Activated naive CD8-positive, alpha-beta T cell treated with anti-CD3 and anti-CD28 coated beads, Interleukin-2, amount 10 ng/mL, durations not matched to agents 7 days and 5 days (primary cell): ENCODE measurements at regions of chr7 and their contacts with region 1.

Region 1: DNA sequence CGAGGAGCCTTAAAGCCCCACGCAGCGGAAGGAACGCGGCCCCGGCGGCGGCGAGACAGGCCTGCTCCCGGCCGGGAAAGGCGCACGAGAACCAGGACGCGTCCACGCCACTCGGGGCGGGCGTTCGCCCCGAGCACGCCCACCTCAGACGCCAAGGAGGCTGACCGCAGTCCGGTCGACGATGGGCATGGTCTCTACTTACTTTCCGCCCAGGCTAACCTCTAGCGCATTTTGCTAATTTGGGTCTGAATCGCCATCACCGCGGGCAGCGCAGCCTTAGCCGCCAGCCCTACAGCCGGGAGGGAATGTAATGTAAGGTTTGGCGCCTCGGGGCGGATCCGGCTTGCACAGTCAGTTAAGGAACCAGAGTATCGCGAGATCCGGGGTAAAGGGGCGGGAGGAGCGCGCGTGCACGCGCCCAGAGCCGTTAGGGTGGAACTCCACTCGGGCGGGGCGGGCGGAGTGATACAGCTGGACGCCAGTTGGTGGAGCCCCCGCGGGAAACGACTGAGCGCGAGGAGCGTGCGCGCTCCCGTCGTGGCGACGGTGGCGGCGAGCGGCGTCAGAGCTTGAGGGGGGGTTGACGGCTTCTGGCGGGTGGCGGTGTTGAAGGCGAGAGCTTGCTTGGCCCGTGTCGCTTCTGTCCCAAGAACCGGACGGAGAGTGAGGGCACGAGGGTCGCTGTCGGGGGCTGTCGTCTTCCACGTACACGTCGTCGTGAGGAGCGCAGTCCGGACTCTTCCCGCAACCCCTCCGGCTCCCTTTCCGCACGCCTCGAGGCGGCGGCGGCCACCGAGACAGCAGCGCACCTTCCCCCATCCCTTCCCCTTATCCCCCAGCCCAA is at the start of gene LUC7L2:
- DNase-seq: peak; percentile 98
- ATAC-seq: peak; percentile 72
- H3K4me3 Mint-ChIP-seq: peak within 1 kb of the TSS; percentile 96
- H3K27ac Mint-ChIP-seq: peak within 1 kb of the TSS; percentile 100
- H3K4me1 Mint-ChIP-seq: peaks cover 25% of the 10 kb centered on the region
- H3K27me3 Mint-ChIP-seq: no peaks in the 10 kb centered on the region
- total RNA-seq, gene LUC7L2: 138 TPM

Region 2: GRCh38 chr7:139104091-139104450 is 255.5 kb before region 1 on chr7:
- POLR2A ChIA-PET with region 1: interaction called, 17 read pairs
- DNase-seq: no peak
- ATAC-seq: peak; percentile 15
- H3K4me3 Mint-ChIP-seq: peak overlapping the region; percentile 93
- H3K27ac Mint-ChIP-seq: peak overlapping the region; percentile 94
- H3K4me1 Mint-ChIP-seq: peaks cover 37% of the 10 kb centered on the region
- H3K27me3 Mint-ChIP-seq: no peaks in the 10 kb centered on the region

Region 3: DNA sequence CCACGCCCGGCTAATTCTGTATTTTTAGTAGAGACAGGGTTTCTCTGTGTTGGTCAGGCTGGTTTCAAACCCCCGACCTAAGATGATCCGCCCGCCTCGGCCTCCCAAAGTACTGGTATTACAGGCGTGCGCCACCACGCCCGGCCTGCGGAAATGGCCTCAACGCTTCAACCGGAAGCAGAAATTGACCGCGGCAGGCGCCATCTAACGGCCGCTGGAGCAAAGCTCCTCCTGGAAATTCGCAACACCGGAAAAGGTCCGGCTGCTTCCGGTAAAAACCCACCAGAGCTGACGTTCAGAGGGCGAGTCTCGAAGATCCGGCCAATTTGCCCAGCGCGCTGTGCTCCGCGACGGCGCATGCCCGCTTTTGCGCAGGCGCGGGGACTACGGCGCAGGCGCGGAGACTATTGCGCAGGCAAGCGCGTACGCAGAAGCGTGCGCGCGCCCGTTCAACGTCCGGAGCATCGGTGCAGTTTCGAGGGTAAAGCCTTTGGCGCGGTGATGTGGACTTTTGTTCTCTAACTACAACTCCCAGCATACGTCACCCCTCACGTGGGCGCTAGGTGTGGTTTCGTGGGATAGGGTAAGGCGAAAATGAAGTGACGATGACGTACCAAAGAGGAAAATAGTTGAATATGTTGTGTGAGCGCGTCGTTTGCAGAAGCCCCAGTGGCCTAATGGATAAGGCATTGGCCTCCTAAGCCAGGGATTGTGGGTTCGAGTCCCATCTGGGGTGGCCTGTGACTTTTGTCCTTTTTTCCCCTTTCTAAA is 19.4 kb before region 1 on chr7:
- POLR2A ChIA-PET with region 1: interaction called, 33 read pairs
- DNase-seq: peak; percentile 97
- ATAC-seq: peak; percentile 75
- H3K4me3 Mint-ChIP-seq: peak overlapping the region; percentile 90
- H3K27ac Mint-ChIP-seq: peak overlapping the region; percentile 99
- H3K4me1 Mint-ChIP-seq: peaks cover 21% of the 10 kb centered on the region
- H3K27me3 Mint-ChIP-seq: peaks cover 2% of the 10 kb centered on the region

Region 4: GRCh38 chr7:139370301-139370942 is 10.8 kb after region 1 on chr7:
- POLR2A ChIA-PET with region 1: interaction called, 18 read pairs
- DNase-seq: no peak
- ATAC-seq: no peak
- H3K4me3 Mint-ChIP-seq: no peak overlapping the region
- H3K27ac Mint-ChIP-seq: no peak overlapping the region
- H3K4me1 Mint-ChIP-seq: peaks cover 36% of the 10 kb centered on the region
- H3K27me3 Mint-ChIP-seq: no peaks in the 10 kb centered on the region